AG04449 (cell line): ENCODE measurements at regions of chr12 and their contacts with region 1.

Region 1: GRCh38 chr12:6752921-6753771 is at the start of gene MLF2:
- DNase-seq: peak; percentile 96
- H3K4me3 ChIP-seq: peak within 1 kb of the TSS; percentile 93
- CTCF ChIP-seq: peak; percentile 94

Region 2: DNA sequence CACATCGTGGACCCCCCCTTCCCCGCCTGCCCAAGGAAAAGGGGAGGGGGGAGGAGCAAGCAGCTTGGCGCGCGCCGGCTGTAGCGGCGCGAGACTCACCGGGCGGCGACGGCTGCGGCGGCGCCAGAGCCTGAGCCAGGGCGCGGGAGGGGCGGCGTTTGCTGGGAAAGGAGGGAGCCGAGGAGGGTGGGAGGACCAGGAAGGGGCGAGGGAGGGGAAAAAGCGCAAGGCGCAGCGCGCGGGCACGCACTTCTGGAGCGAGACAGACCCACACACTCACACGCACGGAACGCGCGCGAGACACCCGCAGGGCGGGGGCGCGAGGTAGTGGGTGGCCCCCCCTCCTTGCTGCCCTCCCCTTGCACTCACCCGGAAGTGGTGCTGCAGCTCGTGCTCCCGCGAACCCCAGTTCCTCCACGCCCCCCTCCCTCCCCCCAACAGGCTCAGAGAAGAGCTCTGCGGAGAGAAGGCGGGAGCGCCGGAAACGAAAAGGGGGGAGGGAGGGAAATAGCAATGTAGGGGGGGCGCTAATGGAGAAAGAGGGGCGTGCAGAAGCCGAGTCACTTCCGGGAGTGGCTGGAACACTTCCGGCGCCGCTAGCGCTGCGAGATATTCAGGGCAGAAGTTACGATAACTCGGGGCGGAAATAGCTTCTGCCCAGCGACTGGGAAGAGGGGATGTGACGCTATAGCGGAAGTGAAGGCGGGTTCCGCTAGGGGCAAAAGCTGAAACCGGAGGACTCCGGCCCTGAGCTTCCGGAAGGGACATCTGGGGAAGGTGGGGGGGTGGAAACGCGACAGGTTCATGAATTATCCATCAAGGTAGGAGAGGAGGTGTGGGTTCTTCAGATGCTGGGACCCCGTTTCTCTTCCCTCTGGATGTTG is 63.9 kb before region 1 on chr12 and contains the start of gene ZNF384:
- CTCF ChIA-PET with region 1: interaction called, 13 read pairs
- POLR2A ChIA-PET with region 1: interaction called, 11 read pairs
- DNase-seq: peak; percentile 93
- H3K4me3 ChIP-seq: peak within 1 kb of the TSS; percentile 93
- CTCF ChIP-seq: no peak

Region 3: DNA sequence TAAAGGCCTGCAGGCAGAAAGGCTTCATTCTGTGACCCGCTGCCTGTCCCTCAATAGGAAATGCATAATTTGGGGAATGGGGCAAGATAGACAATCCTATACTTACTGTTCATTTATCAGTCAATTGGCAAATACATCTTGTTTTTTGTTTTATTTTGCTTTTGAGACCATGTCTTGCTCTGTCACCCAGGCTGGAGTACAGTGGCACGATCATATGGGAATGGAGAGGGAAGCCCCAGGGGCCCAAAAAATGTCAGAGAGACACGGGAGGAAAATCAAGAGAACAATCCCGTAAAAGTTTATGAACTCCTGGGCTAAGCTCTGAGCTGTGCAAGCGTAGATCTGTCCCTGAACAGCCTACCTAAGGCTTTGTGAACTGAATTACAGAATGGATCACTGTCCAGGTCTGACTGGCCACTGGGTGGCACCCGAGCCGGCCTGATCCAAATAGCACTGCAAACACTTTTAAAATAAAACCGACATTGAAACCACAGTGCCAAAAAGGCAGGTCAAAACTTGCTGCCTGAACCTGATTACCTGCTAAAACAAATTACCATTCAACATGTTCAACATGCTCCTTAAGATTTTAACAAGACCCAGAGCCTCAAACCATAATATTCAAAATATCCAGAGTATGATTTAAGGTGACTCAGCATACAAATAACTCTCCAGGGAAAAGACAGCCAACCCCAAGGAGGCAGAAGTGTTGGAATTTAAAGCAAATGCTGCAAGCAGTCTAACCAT is 17.5 kb before region 1 on chr12:
- CTCF ChIA-PET with region 1: interaction called, 113 read pairs
- POLR2A ChIA-PET with region 1: interaction called, 6 read pairs
- DNase-seq: no peak
- H3K4me3 ChIP-seq: no peak overlapping the region
- CTCF ChIP-seq: peak; percentile 60

Region 4: GRCh38 chr12:6778574-6779550 is 25.7 kb after region 1 on chr12:
- CTCF ChIA-PET with region 1: interaction called, 272 read pairs
- POLR2A ChIA-PET with region 1: interaction called, 12 read pairs
- DNase-seq: peak; percentile 53
- H3K4me3 ChIP-seq: peak overlapping the region; percentile 54
- CTCF ChIP-seq: peak; percentile 98

Region 5: GRCh38 chr12:6817098-6817497 is 64.0 kb after region 1 on chr12:
- CTCF ChIA-PET with region 1: interaction called, 304 read pairs
- POLR2A ChIA-PET with region 1: interaction called, 6 read pairs
- DNase-seq: no peak
- H3K4me3 ChIP-seq: no peak overlapping the region
- CTCF ChIP-seq: no peak

Region 6: DNA sequence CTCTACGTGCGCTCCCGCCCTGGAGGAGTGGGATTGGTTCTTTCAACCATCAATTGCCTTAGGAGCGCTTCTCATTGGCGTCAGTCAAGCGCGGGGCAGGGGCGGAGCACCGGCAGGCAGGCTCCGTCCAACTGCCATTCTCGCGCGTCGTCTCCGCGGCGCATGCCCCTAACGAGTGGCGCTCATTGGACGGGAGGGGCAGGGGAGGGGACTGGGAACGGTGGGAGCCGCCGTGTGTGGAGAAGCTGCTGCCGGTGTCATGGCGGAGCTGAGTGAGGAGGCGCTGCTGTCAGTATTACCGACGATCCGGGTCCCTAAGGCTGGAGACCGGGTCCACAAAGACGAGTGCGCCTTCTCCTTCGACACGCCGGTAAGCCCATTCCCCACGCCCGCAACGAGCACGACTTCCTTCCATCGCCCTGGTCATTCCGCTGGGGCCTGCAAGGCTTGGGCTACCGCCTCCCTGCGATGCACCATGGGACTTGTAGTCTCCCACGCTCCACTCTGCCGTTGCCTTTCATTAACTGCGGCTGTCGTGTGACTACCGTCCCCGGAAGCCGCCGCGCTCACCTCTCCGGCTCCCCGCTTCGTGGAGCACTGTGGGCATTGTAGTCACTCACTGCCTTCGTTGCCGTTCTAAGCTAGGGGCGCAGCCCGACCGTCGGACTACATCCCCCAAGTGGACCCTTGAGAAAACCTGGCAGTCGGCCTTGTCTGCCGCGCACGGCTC is 98.9 kb after region 1 on chr12 and contains the start of gene USP5:
- CTCF ChIA-PET with region 1: interaction called, 18 read pairs
- POLR2A ChIA-PET with region 1: interaction called, 16 read pairs
- DNase-seq: peak; percentile 97
- H3K4me3 ChIP-seq: peak within 1 kb of the TSS; percentile 98
- CTCF ChIP-seq: no peak